Activated CD4-positive, alpha-beta T cell treated with anti-CD3 and anti-CD28 coated beads for 36 hours (primary cell): ENCODE measurements at regions of chr11 and their contacts with region 1.

Region 1: GRCh38 chr11:34846467-34846866 is 69.7 kb downstream of the APIP start:
- DNase-seq: no peak
- ATAC-seq: no peak
- H3K4me3 Mint-ChIP-seq: no peak overlapping the region
- H3K27ac Mint-ChIP-seq: no peak overlapping the region
- H3K4me1 Mint-ChIP-seq: no peaks in the 10 kb centered on the region
- H3K27me3 Mint-ChIP-seq: peaks cover 4% of the 10 kb centered on the region

Region 2: GRCh38 chr11:34653826-34654490 is 192.5 kb before region 1 on chr11:
- CTCF ChIA-PET with region 1: no interaction called
- POLR2A ChIA-PET with region 1: no interaction called
- intact Hi-C with region 1: no loop called
- DNase-seq: peak; percentile 46
- ATAC-seq: peak; percentile 39
- H3K4me3 Mint-ChIP-seq: no peak overlapping the region
- H3K27ac Mint-ChIP-seq: peak overlapping the region; percentile 13
- H3K4me1 Mint-ChIP-seq: peaks cover 55% of the 10 kb centered on the region
- H3K27me3 Mint-ChIP-seq: peaks cover 34% of the 10 kb centered on the region

Region 3: DNA sequence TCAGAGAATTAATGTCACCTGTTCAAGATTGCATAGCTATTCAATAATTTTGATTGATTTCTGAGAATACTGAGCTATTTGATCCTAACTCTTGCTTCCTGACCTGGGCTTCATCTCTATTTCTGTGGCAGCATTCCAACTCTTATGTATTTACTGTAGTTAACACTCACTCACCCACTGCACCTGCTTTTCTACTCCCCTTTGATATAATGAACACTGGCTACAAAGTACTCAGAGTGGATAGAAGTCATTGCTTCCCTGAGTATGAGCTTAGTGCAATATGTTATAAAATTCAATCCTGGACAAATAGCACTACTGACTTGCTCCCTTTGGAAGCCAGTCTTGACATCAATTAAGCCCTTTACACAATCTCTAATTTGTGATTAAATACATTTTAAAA is 47.5 kb before region 1 on chr11:
- CTCF ChIA-PET with region 1: no interaction called
- POLR2A ChIA-PET with region 1: no interaction called
- intact Hi-C with region 1: no loop called
- DNase-seq: no peak
- ATAC-seq: no peak
- H3K4me3 Mint-ChIP-seq: no peak overlapping the region
- H3K27ac Mint-ChIP-seq: no peak overlapping the region
- H3K4me1 Mint-ChIP-seq: no peaks in the 10 kb centered on the region
- H3K27me3 Mint-ChIP-seq: peaks cover 15% of the 10 kb centered on the region

Region 4: GRCh38 chr11:34899633-34900016 is 53.2 kb after region 1 on chr11:
- CTCF ChIA-PET with region 1: no interaction called
- POLR2A ChIA-PET with region 1: no interaction called
- intact Hi-C with region 1: loop called in 1 of 2 experiments (anchors 5 kb)
- DNase-seq: peak; percentile 33
- ATAC-seq: no peak
- H3K4me3 Mint-ChIP-seq: no peak overlapping the region
- H3K27ac Mint-ChIP-seq: no peak overlapping the region
- H3K4me1 Mint-ChIP-seq: no peaks in the 10 kb centered on the region
- H3K27me3 Mint-ChIP-seq: no peaks in the 10 kb centered on the region

Region 5: DNA sequence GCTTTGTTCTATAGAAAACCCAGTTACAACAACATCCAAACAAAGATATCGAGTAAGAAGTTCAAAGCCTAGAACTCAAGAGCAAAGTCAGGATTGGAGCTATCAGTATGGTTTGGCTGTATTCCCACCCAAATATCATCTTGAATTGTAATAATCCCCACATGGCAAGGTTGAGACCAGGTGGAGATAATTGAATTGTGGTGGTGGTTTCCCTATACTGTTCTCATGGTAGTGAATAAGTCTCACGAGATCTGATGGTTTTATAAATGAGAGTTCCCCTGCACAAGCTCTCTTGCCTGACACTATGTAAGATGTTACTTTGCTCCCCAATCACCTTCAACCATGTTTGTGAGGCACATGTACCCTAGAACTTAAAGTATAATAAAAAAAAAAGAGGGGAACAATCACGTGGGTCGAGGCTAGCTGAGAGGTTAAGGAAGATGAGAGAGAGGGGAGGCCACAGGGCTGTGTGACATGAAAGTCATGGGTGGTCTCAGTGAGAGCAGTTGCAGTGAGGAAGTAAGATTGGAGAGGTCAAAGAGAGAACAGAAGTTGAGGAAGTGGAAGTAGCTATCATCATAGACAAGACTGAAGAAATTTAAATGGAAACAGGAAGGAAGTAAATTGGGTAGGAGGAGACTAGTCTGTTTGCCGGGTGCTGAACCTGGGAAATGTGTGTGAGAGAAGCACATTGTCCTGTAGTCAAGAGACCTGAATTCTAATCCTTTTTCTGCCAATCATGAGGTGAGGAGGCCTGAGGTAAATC is 212.4 kb after region 1 on chr11:
- CTCF ChIA-PET with region 1: no interaction called
- POLR2A ChIA-PET with region 1: no interaction called
- intact Hi-C with region 1: no loop called
- DNase-seq: no peak
- ATAC-seq: no peak
- H3K4me3 Mint-ChIP-seq: no peak overlapping the region
- H3K27ac Mint-ChIP-seq: peak overlapping the region; percentile 37
- H3K4me1 Mint-ChIP-seq: peaks cover 42% of the 10 kb centered on the region
- H3K27me3 Mint-ChIP-seq: no peaks in the 10 kb centered on the region

Region 6: GRCh38 chr11:35272391-35272902 is 426.0 kb after region 1 on chr11:
- CTCF ChIA-PET with region 1: no interaction called
- POLR2A ChIA-PET with region 1: no interaction called
- intact Hi-C with region 1: no loop called
- DNase-seq: peak; percentile 65
- ATAC-seq: peak; percentile 84
- H3K4me3 Mint-ChIP-seq: peak overlapping the region; percentile 16
- H3K27ac Mint-ChIP-seq: peak overlapping the region; percentile 81
- H3K4me1 Mint-ChIP-seq: peaks cover 46% of the 10 kb centered on the region
- H3K27me3 Mint-ChIP-seq: peaks cover 2% of the 10 kb centered on the region